Activated T-helper 1 cell treated with anti-CD3 and anti-CD28 coated beads, Interleukin-12 subunit alpha, Interleukin-12 subunit beta, Interleukin-2, Interleukin-4 antibody, amounts not matched to agents 30 ng/mL and 10 ng/mL and 1 ng/mL, durations not matched to agents 14 hours and 24 hours and 36 hours (primary cell): ENCODE measurements at regions of chr2 and their contacts with region 1.

Region 1: DNA sequence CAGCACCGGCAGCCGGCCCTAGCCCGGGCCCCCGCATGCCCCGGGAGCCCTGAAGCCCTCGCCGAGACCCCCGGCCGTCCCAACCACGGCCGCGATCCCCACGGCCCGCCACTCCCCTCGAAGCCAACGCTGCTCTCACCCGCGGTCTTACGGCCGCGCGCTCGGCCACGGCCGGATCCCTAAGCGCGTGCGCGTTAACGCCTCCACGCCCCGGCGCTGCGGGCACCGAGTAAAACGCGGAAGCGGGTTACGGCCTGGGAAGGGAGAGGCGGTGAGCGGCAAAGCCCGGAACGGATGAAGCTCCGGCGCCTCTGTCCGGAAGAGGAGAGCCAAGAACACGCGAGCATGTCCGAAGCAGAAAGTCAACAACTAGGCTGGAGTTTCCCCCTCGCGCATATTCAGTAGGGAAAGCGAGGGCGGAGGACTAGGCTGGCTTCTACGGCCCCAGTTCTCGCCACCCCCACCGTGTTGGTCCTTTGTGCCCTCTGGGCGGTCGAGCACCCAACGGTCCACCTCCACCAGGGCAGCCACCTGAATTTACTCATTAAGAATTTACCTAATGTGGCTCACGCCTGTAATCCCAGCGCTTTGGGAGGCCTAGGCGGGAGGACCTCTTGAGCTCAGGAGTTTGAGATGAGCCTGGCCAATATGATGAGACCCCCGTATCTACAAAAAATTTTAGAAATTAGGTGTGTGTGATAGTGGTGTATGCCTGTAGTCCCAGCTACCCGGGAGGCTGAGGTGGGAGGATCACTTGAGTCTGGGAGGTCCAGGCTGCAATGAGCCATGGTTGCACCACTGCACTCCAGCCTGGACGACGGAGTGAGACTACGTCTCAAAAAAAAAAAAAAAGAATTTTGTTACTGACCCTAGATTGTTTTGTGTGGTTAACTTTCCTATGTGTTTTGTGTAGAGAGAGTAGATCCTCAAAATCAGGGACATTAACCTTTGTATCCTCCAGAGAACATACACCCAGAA is at the start of gene KANSL3:
- DNase-seq: peak; percentile 90
- H3K4me3 Mint-ChIP-seq: peak within 1 kb of the TSS; percentile 98
- H3K27ac Mint-ChIP-seq: peak within 1 kb of the TSS; percentile 97
- H3K4me1 Mint-ChIP-seq: peaks cover 39% of the 10 kb centered on the region
- H3K27me3 Mint-ChIP-seq: peaks cover 9% of the 10 kb centered on the region
- total RNA-seq, gene KANSL3: 51.8 and 55.0 TPM in 2 replicates

Region 2: DNA sequence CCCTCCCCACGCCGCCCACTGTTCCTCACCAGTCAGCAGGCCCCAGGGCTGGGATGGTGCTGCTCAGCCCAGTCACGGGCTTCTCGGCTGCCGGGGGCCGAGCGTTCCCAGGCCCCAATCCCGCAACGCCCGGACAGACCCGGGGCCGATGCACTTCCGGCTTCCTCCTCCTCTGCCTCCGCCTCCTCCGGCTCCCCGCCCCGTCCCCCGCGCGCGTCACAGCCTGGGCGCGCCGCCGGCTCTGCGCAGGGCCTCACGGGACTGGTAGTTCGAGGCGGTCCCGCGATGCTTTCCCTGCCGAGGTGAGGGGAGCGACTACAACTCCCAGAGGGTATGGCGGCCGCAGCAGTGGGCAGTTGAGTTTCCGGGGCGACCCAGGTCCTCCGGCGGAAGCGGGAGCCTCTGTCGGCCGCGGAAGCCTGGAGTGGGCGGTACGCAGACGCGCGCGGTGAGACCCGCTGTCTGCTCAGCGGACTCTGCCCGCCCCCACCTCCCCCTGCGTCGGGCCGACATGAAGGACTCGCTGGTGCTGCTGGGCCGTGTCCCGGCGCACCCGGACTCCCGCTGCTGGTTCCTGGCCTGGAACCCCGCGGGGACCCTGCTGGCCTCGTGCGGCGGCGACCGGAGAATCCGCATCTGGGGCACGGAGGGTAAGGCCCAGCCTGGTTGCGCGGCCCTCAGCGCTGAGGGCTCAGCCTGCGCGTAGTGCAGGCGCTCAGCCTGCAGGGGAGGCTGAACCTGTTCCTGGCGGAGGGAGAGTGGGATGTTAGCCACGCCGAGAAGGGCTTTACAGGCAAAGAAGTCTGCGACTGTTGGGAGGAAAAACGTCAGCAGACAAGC is 372.4 kb before region 1 on chr2 and contains the starts of genes CIAO1 and TMEM127:
- intact Hi-C with region 1: loop called (anchors 5 kb)
- DNase-seq: peak; percentile 99
- H3K4me3 Mint-ChIP-seq: peak within 1 kb of the TSS; percentile 96
- H3K27ac Mint-ChIP-seq: peak within 1 kb of the TSS; percentile 94
- H3K4me1 Mint-ChIP-seq: peaks cover 33% of the 10 kb centered on the region
- H3K27me3 Mint-ChIP-seq: no peaks in the 10 kb centered on the region
- total RNA-seq, gene CIAO1: 111 and 115 TPM in 2 replicates
- total RNA-seq, gene TMEM127: 29.7 and 30.1 TPM in 2 replicates

Region 3: GRCh38 chr2:96485751-96486651 is 152.4 kb before region 1 on chr2:
- intact Hi-C with region 1: loop called (anchors 5 kb)
- DNase-seq: peak; percentile 88
- H3K4me3 Mint-ChIP-seq: peak overlapping the region; percentile 92
- H3K27ac Mint-ChIP-seq: peak overlapping the region; percentile 96
- H3K4me1 Mint-ChIP-seq: peaks cover 63% of the 10 kb centered on the region
- H3K27me3 Mint-ChIP-seq: peaks cover 5% of the 10 kb centered on the region

Region 4: GRCh38 chr2:96618604-96619283 is 19.7 kb before region 1 on chr2:
- intact Hi-C with region 1: loop called (anchors 2 kb)
- DNase-seq: no peak
- H3K4me3 Mint-ChIP-seq: no peak overlapping the region
- H3K27ac Mint-ChIP-seq: peak overlapping the region; percentile 2
- H3K4me1 Mint-ChIP-seq: peaks cover 42% of the 10 kb centered on the region
- H3K27me3 Mint-ChIP-seq: no peaks in the 10 kb centered on the region

Region 5: GRCh38 chr2:96760036-96760985 is 121.9 kb after region 1 on chr2 and contains the start of gene CNNM4:
- intact Hi-C with region 1: loop called (anchors 1 kb)
- DNase-seq: peak; percentile 89
- H3K4me3 Mint-ChIP-seq: peak within 1 kb of the TSS; percentile 92
- H3K27ac Mint-ChIP-seq: peak within 1 kb of the TSS; percentile 88
- H3K4me1 Mint-ChIP-seq: peaks cover 54% of the 10 kb centered on the region
- H3K27me3 Mint-ChIP-seq: no peaks in the 10 kb centered on the region
- total RNA-seq, gene CNNM4: 9.9 and 11.1 TPM in 2 replicates

Region 6: GRCh38 chr2:96856776-96857673 is 218.6 kb after region 1 on chr2:
- intact Hi-C with region 1: loop called (anchors 5 kb)
- DNase-seq: no peak
- H3K4me3 Mint-ChIP-seq: peak overlapping the region; percentile 85
- H3K27ac Mint-ChIP-seq: peak overlapping the region; percentile 88
- H3K4me1 Mint-ChIP-seq: peaks cover 26% of the 10 kb centered on the region
- H3K27me3 Mint-ChIP-seq: no peaks in the 10 kb centered on the region